H1 (cell line): ENCODE measurements at regions of chr3 and their contacts with region 1.

Region 1: GRCh38 chr3:186002884-186003472 is 65.2 kb upstream of the TRA2B start:
- DNase-seq: peak; percentile 10 to 53
- H3K4me3 ChIP-seq: no peak overlapping the region
- H3K27ac ChIP-seq: no peak overlapping the region
- H3K4me1 ChIP-seq: no peaks in the 10 kb centered on the region
- H3K27me3 ChIP-seq: peaks cover 0 to 2% (median 0%) of the 10 kb centered on the region in 4 experiments; a peak in 1 of 7 replicates
- CTCF ChIP-seq: peak; percentile 53 to 71 (median 64)
- EP300 ChIP-seq: no peak
- POLR2A ChIP-seq: no peak
- RAD21 ChIP-seq: peak; percentile 70 to 73

Region 2: DNA sequence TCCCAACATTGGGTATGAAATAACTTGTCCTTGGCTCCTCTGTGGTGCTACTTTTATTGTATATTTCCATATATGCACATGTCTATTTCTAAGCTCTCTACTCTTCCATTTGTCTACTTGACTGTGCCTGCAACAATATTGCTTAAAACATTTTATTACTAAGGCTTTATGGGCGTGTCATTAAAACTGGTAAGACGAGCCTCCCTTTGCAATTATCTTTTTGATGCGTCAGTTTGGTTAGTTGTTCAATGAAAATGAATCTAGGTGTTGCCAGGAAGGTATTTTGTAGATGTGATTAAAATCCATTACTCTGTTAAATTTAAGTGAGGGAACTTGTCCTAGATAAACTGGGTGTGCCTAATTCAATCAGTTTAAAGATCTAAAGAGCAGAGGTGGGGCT is 52.3 kb before region 1 on chr3:
- CTCF ChIA-PET with region 1: no interaction called
- POLR2A ChIA-PET with region 1: no interaction called
- DNase-seq: no peak
- H3K4me3 ChIP-seq: no peak overlapping the region
- H3K27ac ChIP-seq: no peak overlapping the region
- H3K4me1 ChIP-seq: no peaks in the 10 kb centered on the region
- H3K27me3 ChIP-seq: no peaks in the 10 kb centered on the region
- CTCF ChIP-seq: no peak
- EP300 ChIP-seq: no peak
- POLR2A ChIP-seq: no peak
- RAD21 ChIP-seq: no peak

Region 3: GRCh38 chr3:185992831-185993374 is 10.1 kb before region 1 on chr3:
- CTCF ChIA-PET with region 1: interaction called, 26 read pairs
- POLR2A ChIA-PET with region 1: no interaction called
- DNase-seq: no peak
- H3K4me3 ChIP-seq: no peak overlapping the region
- H3K27ac ChIP-seq: no peak overlapping the region
- H3K4me1 ChIP-seq: no peaks in the 10 kb centered on the region
- H3K27me3 ChIP-seq: no peaks in the 10 kb centered on the region
- CTCF ChIP-seq: no peak
- EP300 ChIP-seq: no peak
- POLR2A ChIP-seq: no peak
- RAD21 ChIP-seq: no peak

Region 4: GRCh38 chr3:186220911-186221645 is 218.1 kb after region 1 on chr3:
- CTCF ChIA-PET with region 1: interaction called, 10 read pairs
- POLR2A ChIA-PET with region 1: no interaction called
- DNase-seq: no peak
- H3K4me3 ChIP-seq: no peak overlapping the region
- H3K27ac ChIP-seq: no peak overlapping the region
- H3K4me1 ChIP-seq: no peaks in the 10 kb centered on the region
- H3K27me3 ChIP-seq: peaks cover 0 to 2% (median 0%) of the 10 kb centered on the region in 4 experiments; a peak in 1 of 7 replicates
- CTCF ChIP-seq: peak; percentile 9 to 32 (median 29); a peak in 3 of 4 replicates
- EP300 ChIP-seq: no peak
- POLR2A ChIP-seq: no peak
- RAD21 ChIP-seq: peak; percentile 50 to 62